ENCODE measurements at regions of chr3 and their contacts with region 1.

Region 1: GRCh38 chr3:49723628-49724551 is at the start of gene GMPPB:
- DNase-seq: peak; percentile 78
- ATAC-seq: peak; percentile 90
- H3K4me3 ChIP-seq: peak within 1 kb of the TSS; percentile 87
- H3K27ac ChIP-seq: peak within 1 kb of the TSS; percentile 93
- H3K4me1 ChIP-seq: peaks cover 19% of the 10 kb centered on the region
- H3K27me3 ChIP-seq: no peaks in the 10 kb centered on the region
- CTCF ChIP-seq: no peak
- EP300 ChIP-seq: no peak
- POLR2A ChIP-seq: peak; percentile 92
- RAD21 ChIP-seq: no peak
- polyA plus RNA-seq, gene GMPPB: 2.3 to 8.7 TPM

Region 2: DNA sequence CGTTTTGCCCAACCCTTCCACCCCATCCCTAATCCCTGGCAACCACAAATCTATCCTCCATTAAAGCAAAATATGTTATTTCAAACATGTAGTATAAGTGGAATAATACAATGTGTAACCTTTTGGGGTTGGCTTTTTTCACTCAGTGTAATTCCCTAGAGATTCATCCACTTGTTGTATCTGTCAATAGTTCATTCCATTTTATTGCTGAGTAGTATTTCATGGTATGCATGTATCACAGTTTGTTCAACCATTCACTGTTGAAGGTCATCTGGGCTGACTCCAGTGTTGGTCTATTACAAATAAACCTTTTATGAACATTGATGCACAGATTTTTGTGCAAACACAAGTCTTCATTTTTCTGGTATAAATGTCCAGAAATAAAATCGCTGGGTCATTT is 130.8 kb before region 1 on chr3:
- CTCF ChIA-PET with region 1: no interaction called
- POLR2A ChIA-PET with region 1: no interaction called
- RAD21 ChIA-PET with region 1: no interaction called
- SMC1A ChIA-PET with region 1: no interaction called
- in situ Hi-C with region 1: no loop called
- intact Hi-C with region 1: no loop called
- DNase-seq: no peak
- ATAC-seq: no peak
- H3K4me3 ChIP-seq: no peak overlapping the region
- H3K27ac ChIP-seq: no peak overlapping the region
- H3K4me1 ChIP-seq: no peaks in the 10 kb centered on the region
- H3K27me3 ChIP-seq: no peaks in the 10 kb centered on the region
- CTCF ChIP-seq: no peak
- EP300 ChIP-seq: no peak
- POLR2A ChIP-seq: no peak
- RAD21 ChIP-seq: no peak

Region 3: DNA sequence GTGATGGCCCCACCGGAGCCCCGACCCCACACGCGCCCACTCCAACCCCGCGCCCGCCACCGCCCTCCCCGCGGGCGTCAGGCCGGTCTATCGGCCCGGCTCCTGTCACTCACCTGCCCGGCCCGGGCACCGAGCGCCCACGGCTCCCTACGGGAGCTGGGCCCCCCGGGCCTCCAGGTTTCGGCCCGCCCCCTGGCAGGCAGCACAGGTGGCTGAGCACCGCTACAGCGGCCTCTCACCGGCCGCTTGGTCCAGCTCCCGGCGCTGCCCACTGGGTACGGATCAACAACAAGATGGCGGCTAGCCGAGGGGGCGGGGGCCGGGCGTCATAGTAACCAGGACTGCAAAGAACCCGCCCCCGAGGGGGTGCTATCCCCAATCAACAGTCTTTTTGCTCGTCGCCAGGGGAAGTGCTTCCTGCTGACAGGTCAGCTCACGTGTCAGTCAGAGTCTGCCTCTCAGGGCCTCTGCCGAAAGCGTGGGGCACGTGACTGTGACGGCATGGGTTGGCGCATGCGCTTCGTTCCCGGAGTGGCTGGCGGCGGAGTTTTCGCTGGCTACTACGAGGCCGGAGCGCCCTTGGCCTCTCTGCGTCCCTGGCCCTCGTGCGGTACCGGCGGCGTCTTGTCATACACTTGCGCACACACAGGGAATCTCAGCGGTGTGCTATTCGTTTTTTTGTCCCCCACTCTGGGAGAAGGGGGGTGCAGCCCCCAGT is 62.5 kb after region 1 on chr3 and contains the start of gene IP6K1:
- CTCF ChIA-PET with region 1: no interaction called
- POLR2A ChIA-PET with region 1: interaction called, 3 read pairs
- RAD21 ChIA-PET with region 1: no interaction called
- SMC1A ChIA-PET with region 1: no interaction called
- in situ Hi-C with region 1: no loop called
- intact Hi-C with region 1: loop called (anchors 5 kb)
- DNase-seq: peak; percentile 99
- ATAC-seq: peak; percentile 99
- H3K4me3 ChIP-seq: peak within 1 kb of the TSS; percentile 96
- H3K27ac ChIP-seq: peak within 1 kb of the TSS; percentile 62
- H3K4me1 ChIP-seq: peaks cover 9% of the 10 kb centered on the region
- H3K27me3 ChIP-seq: no peaks in the 10 kb centered on the region
- CTCF ChIP-seq: no peak
- EP300 ChIP-seq: no peak
- POLR2A ChIP-seq: peak; percentile 96
- RAD21 ChIP-seq: no peak
- polyA plus RNA-seq, gene IP6K1: 1.3 to 2.0 TPM

Region 4: GRCh38 chr3:50050361-50050760 is 326.5 kb after region 1 on chr3:
- CTCF ChIA-PET with region 1: no interaction called
- POLR2A ChIA-PET with region 1: no interaction called
- RAD21 ChIA-PET with region 1: no interaction called
- SMC1A ChIA-PET with region 1: no interaction called
- in situ Hi-C with region 1: no loop called
- intact Hi-C with region 1: no loop called
- DNase-seq: no peak
- ATAC-seq: no peak
- H3K4me3 ChIP-seq: no peak overlapping the region
- H3K27ac ChIP-seq: no peak overlapping the region
- H3K4me1 ChIP-seq: no peaks in the 10 kb centered on the region
- H3K27me3 ChIP-seq: no peaks in the 10 kb centered on the region
- CTCF ChIP-seq: no peak
- EP300 ChIP-seq: no peak
- POLR2A ChIP-seq: no peak
- RAD21 ChIP-seq: no peak

Measured in GM12878 (cell line).